MCF 10A (cell line): ENCODE measurements at regions of chr16 and their contacts with region 1.

Region 1: GRCh38 chr16:66344533-66345145 is 21.9 kb upstream of the CDH5 start:
- DNase-seq: peak; percentile 61
- H3K4me3 Mint-ChIP-seq: no peak overlapping the region
- H3K27ac Mint-ChIP-seq: no peak overlapping the region
- H3K4me1 Mint-ChIP-seq: no peaks in the 10 kb centered on the region
- H3K27me3 Mint-ChIP-seq: peaks cover 71% of the 10 kb centered on the region
- CTCF ChIP-seq: peak; percentile 62

Region 2: GRCh38 chr16:66127459-66128370 is 216.9 kb before region 1 on chr16:
- CTCF ChIA-PET with region 1: no interaction called
- POLR2A ChIA-PET with region 1: no interaction called
- intact Hi-C with region 1: no loop called
- DNase-seq: no peak
- H3K4me3 Mint-ChIP-seq: no peak overlapping the region
- H3K27ac Mint-ChIP-seq: no peak overlapping the region
- H3K4me1 Mint-ChIP-seq: no peaks in the 10 kb centered on the region
- H3K27me3 Mint-ChIP-seq: no peaks in the 10 kb centered on the region
- CTCF ChIP-seq: no peak

Region 3: DNA sequence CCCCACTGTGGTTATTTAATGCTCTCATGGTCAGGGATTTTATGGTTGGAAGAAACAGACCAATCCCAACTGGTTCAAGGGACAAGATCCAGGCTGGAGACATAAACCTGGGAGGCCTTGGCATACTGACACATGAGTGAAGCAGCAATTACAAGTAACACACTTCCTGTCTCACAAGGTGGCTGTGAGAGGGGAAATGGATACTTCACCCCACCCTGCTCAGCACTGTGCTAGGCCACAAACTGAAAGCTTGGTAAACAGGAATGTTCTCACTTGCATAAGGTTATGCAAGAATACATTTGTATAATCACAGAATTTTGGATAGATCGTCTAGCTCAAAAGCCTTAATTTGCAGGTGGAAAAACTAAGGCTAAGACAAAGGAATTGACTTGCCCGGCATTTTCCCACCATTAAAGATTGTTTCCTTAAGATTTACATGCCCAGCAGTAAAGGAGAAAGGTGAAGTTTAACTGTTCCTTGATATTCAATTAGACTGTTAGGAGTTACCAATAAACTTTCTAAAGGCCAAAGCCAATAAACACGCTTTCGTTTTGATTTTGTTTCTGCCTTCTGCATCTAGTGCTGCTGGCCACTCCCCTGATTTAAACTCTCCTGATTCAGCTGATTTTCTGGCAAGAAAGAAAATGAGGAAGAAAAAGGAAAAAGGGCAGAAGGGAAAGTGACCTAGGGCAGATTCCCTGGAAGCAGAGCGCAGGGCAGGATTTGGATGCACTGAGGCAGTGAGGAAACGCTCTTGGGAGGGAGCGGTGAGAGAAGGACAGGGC is 193.7 kb before region 1 on chr16:
- CTCF ChIA-PET with region 1: no interaction called
- POLR2A ChIA-PET with region 1: no interaction called
- intact Hi-C with region 1: no loop called
- DNase-seq: no peak
- H3K4me3 Mint-ChIP-seq: no peak overlapping the region
- H3K27ac Mint-ChIP-seq: no peak overlapping the region
- H3K4me1 Mint-ChIP-seq: no peaks in the 10 kb centered on the region
- H3K27me3 Mint-ChIP-seq: no peaks in the 10 kb centered on the region
- CTCF ChIP-seq: no peak

Region 4: GRCh38 chr16:66270333-66270927 is 74.2 kb before region 1 on chr16:
- CTCF ChIA-PET with region 1: interaction called, 26 read pairs
- POLR2A ChIA-PET with region 1: no interaction called
- intact Hi-C with region 1: loop called (anchors 2 kb)
- DNase-seq: peak; percentile 56
- H3K4me3 Mint-ChIP-seq: peak overlapping the region; percentile 7
- H3K27ac Mint-ChIP-seq: no peak overlapping the region
- H3K4me1 Mint-ChIP-seq: peaks cover 14% of the 10 kb centered on the region
- H3K27me3 Mint-ChIP-seq: no peaks in the 10 kb centered on the region
- CTCF ChIP-seq: peak; percentile 94

Region 5: DNA sequence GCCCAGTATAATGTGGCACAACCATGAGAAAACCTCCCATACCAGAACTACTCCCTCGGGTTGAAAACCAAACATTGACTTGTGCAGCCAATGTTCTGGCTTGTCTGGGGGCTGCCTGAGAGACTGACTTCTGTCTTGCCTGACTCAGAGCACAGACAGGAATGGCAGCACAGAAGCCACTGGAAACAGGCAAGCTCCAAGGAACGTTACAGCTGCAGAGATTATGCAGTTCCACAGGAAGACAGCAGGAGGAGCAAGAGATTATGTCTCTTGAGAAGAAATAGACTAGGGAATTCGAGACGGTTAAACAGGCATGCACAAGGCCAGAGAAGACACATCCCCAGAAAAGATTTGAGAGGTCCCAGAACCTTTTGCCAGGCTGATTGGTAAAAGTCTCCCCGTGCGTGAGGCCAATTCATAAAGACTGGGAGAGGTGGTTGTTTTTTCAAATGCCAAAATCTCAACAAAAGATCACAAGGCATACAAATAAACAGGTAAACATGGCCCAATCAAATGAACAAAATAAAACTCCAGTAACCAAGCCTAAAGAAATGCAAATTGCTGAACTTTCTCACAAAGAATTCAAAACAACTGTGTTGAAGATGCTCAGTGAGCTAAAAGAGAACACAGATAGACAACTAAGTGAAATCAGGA is 68.7 kb before region 1 on chr16:
- CTCF ChIA-PET with region 1: interaction called, 26 read pairs
- POLR2A ChIA-PET with region 1: no interaction called
- intact Hi-C with region 1: loop called (anchors 2 kb)
- DNase-seq: peak; percentile 78
- H3K4me3 Mint-ChIP-seq: no peak overlapping the region
- H3K27ac Mint-ChIP-seq: no peak overlapping the region
- H3K4me1 Mint-ChIP-seq: peaks cover 29% of the 10 kb centered on the region
- H3K27me3 Mint-ChIP-seq: peaks cover 16% of the 10 kb centered on the region
- CTCF ChIP-seq: peak; percentile 76

Region 6: GRCh38 chr16:66315210-66315825 is 29.3 kb before region 1 on chr16:
- CTCF ChIA-PET with region 1: interaction called, 11 read pairs
- POLR2A ChIA-PET with region 1: no interaction called
- intact Hi-C with region 1: no loop called
- DNase-seq: peak; percentile 79
- H3K4me3 Mint-ChIP-seq: no peak overlapping the region
- H3K27ac Mint-ChIP-seq: no peak overlapping the region
- H3K4me1 Mint-ChIP-seq: no peaks in the 10 kb centered on the region
- H3K27me3 Mint-ChIP-seq: peaks cover 19% of the 10 kb centered on the region
- CTCF ChIP-seq: peak; percentile 92

Region 7: DNA sequence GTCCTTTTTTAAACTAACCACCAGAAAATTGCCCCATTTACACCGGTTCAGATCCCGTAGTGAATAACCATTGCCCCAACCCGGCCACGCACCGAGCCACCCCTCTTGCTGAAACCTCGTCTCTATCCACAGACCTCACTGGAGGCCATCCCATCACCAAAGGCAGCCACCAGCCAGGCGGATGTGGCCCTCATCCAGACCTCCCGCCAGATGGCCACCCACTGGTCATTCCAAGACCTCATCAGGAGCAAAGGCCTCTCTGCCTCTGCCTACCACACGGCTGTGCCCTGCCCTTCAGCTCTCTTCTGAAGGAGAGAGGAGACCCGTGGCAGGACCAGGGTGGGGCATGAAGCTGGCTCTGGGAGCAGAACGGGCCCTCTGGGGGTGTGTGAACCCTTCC is 16.4 kb before region 1 on chr16:
- CTCF ChIA-PET with region 1: interaction called, 22 read pairs
- POLR2A ChIA-PET with region 1: no interaction called
- intact Hi-C with region 1: no loop called
- DNase-seq: no peak
- H3K4me3 Mint-ChIP-seq: no peak overlapping the region
- H3K27ac Mint-ChIP-seq: no peak overlapping the region
- H3K4me1 Mint-ChIP-seq: no peaks in the 10 kb centered on the region
- H3K27me3 Mint-ChIP-seq: peaks cover 21% of the 10 kb centered on the region
- CTCF ChIP-seq: no peak

Region 8: GRCh38 chr16:66357153-66357928 is 12.7 kb after region 1 on chr16:
- CTCF ChIA-PET with region 1: interaction called, 81 read pairs
- POLR2A ChIA-PET with region 1: no interaction called
- intact Hi-C with region 1: no loop called
- DNase-seq: peak; percentile 77
- H3K4me3 Mint-ChIP-seq: no peak overlapping the region
- H3K27ac Mint-ChIP-seq: no peak overlapping the region
- H3K4me1 Mint-ChIP-seq: peaks cover 17% of the 10 kb centered on the region
- H3K27me3 Mint-ChIP-seq: peaks cover 59% of the 10 kb centered on the region
- CTCF ChIP-seq: peak; percentile 56

Region 9: GRCh38 chr16:66378859-66379570 is 34.4 kb after region 1 on chr16:
- CTCF ChIA-PET with region 1: no interaction called
- POLR2A ChIA-PET with region 1: no interaction called
- intact Hi-C with region 1: no loop called
- DNase-seq: no peak
- H3K4me3 Mint-ChIP-seq: no peak overlapping the region
- H3K27ac Mint-ChIP-seq: no peak overlapping the region
- H3K4me1 Mint-ChIP-seq: peaks cover 19% of the 10 kb centered on the region
- H3K27me3 Mint-ChIP-seq: no peaks in the 10 kb centered on the region
- CTCF ChIP-seq: no peak